Activated T-helper 2 cell treated with anti-CD3 and anti-CD28 coated beads, Interferon-gamma antibody, Interleukin-2, Interleukin-4, amounts not matched to agents 10 μg/mL and 5 μg/mL and 100 μg/mL, durations not matched to agents 14 hours and 24 hours and 36 hours (primary cell): ENCODE measurements at regions of chr15 and their contacts with region 1.

Region 1: GRCh38 chr15:64067564-64068030 is 21.3 kb upstream of the DAPK2 start:
- DNase-seq: peak; percentile 58
- H3K4me3 Mint-ChIP-seq: no peak overlapping the region
- H3K27ac Mint-ChIP-seq: no peak overlapping the region
- H3K4me1 Mint-ChIP-seq: peaks cover 10% of the 10 kb centered on the region
- H3K27me3 Mint-ChIP-seq: no peaks in the 10 kb centered on the region

Region 2: GRCh38 chr15:63610200-63610841 is 457.3 kb before region 1 on chr15:
- intact Hi-C with region 1: loop called (anchors 2 kb)
- DNase-seq: peak; percentile 74
- H3K4me3 Mint-ChIP-seq: peak overlapping the region; percentile 0
- H3K27ac Mint-ChIP-seq: peak overlapping the region; percentile 92
- H3K4me1 Mint-ChIP-seq: peaks cover 25% of the 10 kb centered on the region
- H3K27me3 Mint-ChIP-seq: no peaks in the 10 kb centered on the region

Region 3: DNA sequence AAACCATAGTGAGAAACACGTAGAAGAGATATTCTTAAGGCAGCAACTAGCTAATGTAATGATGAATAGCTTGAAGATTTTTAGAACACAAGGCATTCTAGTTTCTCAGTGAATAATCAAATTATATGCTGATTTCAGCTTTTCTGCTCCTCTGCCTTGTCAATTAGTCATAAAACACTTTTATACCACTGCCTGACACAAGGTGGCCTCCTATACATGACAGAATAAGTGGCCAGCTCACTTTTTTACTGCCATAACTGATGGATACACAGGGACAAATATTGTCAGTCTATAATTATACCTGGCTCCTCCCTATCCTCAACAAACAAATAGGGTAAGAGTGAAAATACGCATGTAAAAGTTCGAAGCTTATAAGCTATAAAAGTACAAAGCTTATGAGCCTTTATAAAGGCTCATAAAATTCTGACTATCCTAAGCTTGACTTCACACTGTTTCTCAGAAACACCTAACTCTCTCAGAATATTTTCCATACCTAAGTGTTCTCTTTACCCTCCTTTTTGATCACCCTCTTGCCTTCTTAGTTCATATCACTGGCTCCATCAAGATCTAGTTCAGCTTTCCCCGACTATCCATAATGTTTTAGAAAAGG is 315.4 kb before region 1 on chr15:
- intact Hi-C with region 1: loop called (anchors 1 kb)
- DNase-seq: peak; percentile 32
- H3K4me3 Mint-ChIP-seq: no peak overlapping the region
- H3K27ac Mint-ChIP-seq: no peak overlapping the region
- H3K4me1 Mint-ChIP-seq: peaks cover 5% of the 10 kb centered on the region
- H3K27me3 Mint-ChIP-seq: no peaks in the 10 kb centered on the region

Region 4: GRCh38 chr15:63826528-63826927 is 241.1 kb before region 1 on chr15:
- intact Hi-C with region 1: loop called (anchors 5 kb)
- DNase-seq: no peak
- H3K4me3 Mint-ChIP-seq: no peak overlapping the region
- H3K27ac Mint-ChIP-seq: no peak overlapping the region
- H3K4me1 Mint-ChIP-seq: peaks cover 52% of the 10 kb centered on the region
- H3K27me3 Mint-ChIP-seq: no peaks in the 10 kb centered on the region